ENCODE measurements at regions of chr1 and their contacts with region 1.

Region 1: GRCh38 chr1:154335025-154335714 is 9.8 kb downstream of the ATP8B2 start:
- DNase-seq: peak; percentile 78 to 95 (median 93)
- ATAC-seq: peak; percentile 94
- H3K4me3 ChIP-seq: no peak overlapping the region
- H3K4me3 Mint-ChIP-seq: peak overlapping the region; percentile 48
- H3K27ac ChIP-seq: peak overlapping the region; percentile 22 to 75
- H3K27ac Mint-ChIP-seq: peak overlapping the region; percentile 95
- H3K4me1 ChIP-seq: peaks cover 78% of the 10 kb centered on the region
- H3K4me1 Mint-ChIP-seq: peaks cover 75% of the 10 kb centered on the region
- H3K27me3 ChIP-seq: no peaks in the 10 kb centered on the region
- H3K27me3 Mint-ChIP-seq: no peaks in the 10 kb centered on the region
- CTCF ChIP-seq: peak; percentile 88

Region 2: GRCh38 chr1:153977250-153978240 is 357.6 kb before region 1 on chr1 and contains the start of gene JTB:
- CTCF ChIA-PET with region 1: no interaction called
- POLR2A ChIA-PET with region 1: no interaction called
- intact Hi-C with region 1: no loop called
- DNase-seq: peak; percentile 62 to 91 (median 86)
- ATAC-seq: peak; percentile 95
- H3K4me3 ChIP-seq: peak within 1 kb of the TSS; percentile 92 to 97
- H3K4me3 Mint-ChIP-seq: peak within 1 kb of the TSS; percentile 97
- H3K27ac ChIP-seq: peak within 1 kb of the TSS; percentile 74 to 77
- H3K27ac Mint-ChIP-seq: peak within 1 kb of the TSS; percentile 96
- H3K4me1 ChIP-seq: peaks cover 20% of the 10 kb centered on the region
- H3K4me1 Mint-ChIP-seq: peaks cover 35% of the 10 kb centered on the region
- H3K27me3 ChIP-seq: no peaks in the 10 kb centered on the region
- H3K27me3 Mint-ChIP-seq: no peaks in the 10 kb centered on the region
- CTCF ChIP-seq: no peak
- total RNA-seq, gene JTB: 90.4 to 91.1 TPM

Region 3: GRCh38 chr1:154183045-154183915 is 151.9 kb before region 1 on chr1:
- CTCF ChIA-PET with region 1: no interaction called
- POLR2A ChIA-PET with region 1: no interaction called
- intact Hi-C with region 1: loop called in 1 of 2 experiments (anchors 2 kb)
- DNase-seq: peak; percentile 86 to 96 (median 94)
- ATAC-seq: peak; percentile 75
- H3K4me3 ChIP-seq: peak overlapping the region; percentile 79 to 91
- H3K4me3 Mint-ChIP-seq: peak overlapping the region; percentile 100
- H3K27ac ChIP-seq: peak overlapping the region; percentile 95 to 97
- H3K27ac Mint-ChIP-seq: peak overlapping the region; percentile 95
- H3K4me1 ChIP-seq: peaks cover 42% of the 10 kb centered on the region
- H3K4me1 Mint-ChIP-seq: peaks cover 48% of the 10 kb centered on the region
- H3K27me3 ChIP-seq: no peaks in the 10 kb centered on the region
- H3K27me3 Mint-ChIP-seq: no peaks in the 10 kb centered on the region
- CTCF ChIP-seq: no peak

Region 4: DNA sequence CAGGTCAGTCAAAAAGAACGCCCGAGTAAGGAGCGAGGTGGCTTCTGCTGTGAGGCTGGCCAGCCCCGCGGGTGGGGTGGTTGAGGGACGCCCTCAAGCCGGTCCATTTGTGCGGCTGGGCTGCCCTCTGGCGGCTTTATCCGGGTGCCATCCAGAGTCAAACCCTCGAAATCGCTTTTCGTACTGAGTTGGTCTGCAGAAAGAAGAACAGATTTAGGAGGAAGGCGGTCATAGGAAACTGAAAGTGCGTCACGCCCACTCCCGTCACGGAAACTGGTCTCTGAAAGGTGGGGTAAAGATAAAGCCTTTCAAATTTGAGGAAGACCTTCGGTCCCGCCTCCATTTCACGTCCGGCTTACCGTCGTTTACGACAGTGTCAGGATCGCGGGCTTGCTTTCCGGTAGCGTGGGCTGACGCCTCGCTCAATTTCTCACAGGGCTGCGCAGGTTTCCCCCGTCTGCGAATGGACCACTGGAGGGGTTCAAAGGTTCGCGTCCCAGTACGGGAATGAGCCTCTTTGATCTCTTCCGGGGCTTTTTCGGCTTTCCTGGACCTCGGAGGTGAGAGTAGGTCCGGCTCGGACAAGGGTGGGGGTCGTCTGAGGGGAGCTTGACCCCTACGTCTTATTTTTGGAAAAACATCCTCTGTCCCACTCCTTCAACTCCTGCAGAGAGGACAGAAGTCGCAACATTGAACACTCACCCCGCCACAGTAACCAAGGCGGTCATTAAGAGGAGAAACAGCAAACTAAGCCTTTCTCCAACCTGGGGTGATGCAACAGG is 62.8 kb before region 1 on chr1 and contains the start of gene HAX1:
- CTCF ChIA-PET with region 1: interaction called, 27 read pairs
- POLR2A ChIA-PET with region 1: interaction called, 5 read pairs
- intact Hi-C with region 1: loop called in 1 of 2 experiments (anchors 2 kb)
- DNase-seq: peak; percentile 91 to 100 (median 94)
- ATAC-seq: peak; percentile 85
- H3K4me3 ChIP-seq: peak within 1 kb of the TSS; percentile 85 to 91
- H3K4me3 Mint-ChIP-seq: peak within 1 kb of the TSS; percentile 94
- H3K27ac ChIP-seq: peak within 1 kb of the TSS; percentile 88 to 92
- H3K27ac Mint-ChIP-seq: peak within 1 kb of the TSS; percentile 98
- H3K4me1 ChIP-seq: peaks cover 22% of the 10 kb centered on the region
- H3K4me1 Mint-ChIP-seq: peaks cover 38% of the 10 kb centered on the region
- H3K27me3 ChIP-seq: no peaks in the 10 kb centered on the region
- H3K27me3 Mint-ChIP-seq: no peaks in the 10 kb centered on the region
- CTCF ChIP-seq: peak; percentile 75
- total RNA-seq, gene HAX1: 56.8 to 58.4 TPM

Region 5: GRCh38 chr1:154352581-154353459 is 17.6 kb after region 1 on chr1:
- CTCF ChIA-PET with region 1: interaction called, 184 read pairs
- POLR2A ChIA-PET with region 1: interaction called, 4 read pairs
- intact Hi-C with region 1: no loop called
- DNase-seq: peak in 7 of 9 experiments; percentile 21 to 72 (median 55)
- ATAC-seq: peak; percentile 73
- H3K4me3 ChIP-seq: peak overlapping the region; percentile 45 to 63
- H3K4me3 Mint-ChIP-seq: peak overlapping the region; percentile 91
- H3K27ac ChIP-seq: no peak overlapping the region
- H3K27ac Mint-ChIP-seq: peak overlapping the region; percentile 81
- H3K4me1 ChIP-seq: peaks cover 27% of the 10 kb centered on the region
- H3K4me1 Mint-ChIP-seq: peaks cover 44% of the 10 kb centered on the region
- H3K27me3 ChIP-seq: no peaks in the 10 kb centered on the region
- H3K27me3 Mint-ChIP-seq: no peaks in the 10 kb centered on the region
- CTCF ChIP-seq: no peak

Region 6: DNA sequence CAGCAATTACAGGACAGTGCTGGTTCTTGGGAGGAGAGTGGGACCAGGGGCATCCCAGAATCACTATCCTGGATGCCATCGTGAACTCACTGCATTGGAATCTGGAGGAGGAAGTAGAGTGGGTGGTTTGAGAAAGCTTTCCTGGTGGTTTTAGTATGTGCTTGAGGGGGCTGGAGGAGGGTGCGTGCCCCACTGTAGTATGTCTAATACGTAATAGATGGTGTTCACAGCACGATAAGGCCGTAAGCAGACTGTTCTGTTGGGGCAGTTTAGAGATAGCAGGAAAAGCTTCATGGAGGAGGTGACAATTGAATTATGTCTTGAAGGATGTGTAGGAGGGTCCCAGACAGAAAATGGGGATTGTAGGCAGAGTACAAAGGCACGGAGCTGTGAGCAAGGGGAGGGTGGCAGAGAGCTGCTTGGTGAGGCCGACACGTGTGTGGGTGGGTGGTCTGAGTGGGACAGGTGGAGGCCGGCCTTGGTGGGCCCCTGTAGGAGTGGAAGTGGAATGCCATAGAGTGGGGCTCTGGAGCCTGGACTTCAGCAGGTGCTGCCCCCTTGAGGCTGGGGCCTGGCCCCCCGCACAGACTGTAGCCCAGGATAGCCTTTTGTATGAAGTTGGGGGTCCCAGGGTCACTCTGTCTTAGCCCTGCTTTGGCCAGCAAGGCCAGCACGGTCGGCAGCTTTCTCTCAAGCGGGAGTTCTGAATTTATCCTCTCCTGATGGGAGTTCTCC is 107.0 kb after region 1 on chr1:
- CTCF ChIA-PET with region 1: interaction called, 11 read pairs
- POLR2A ChIA-PET with region 1: no interaction called
- intact Hi-C with region 1: no loop called
- DNase-seq: peak in 3 of 9 experiments; percentile 19 to 42 (median 30)
- ATAC-seq: no peak
- H3K4me3 ChIP-seq: no peak overlapping the region
- H3K4me3 Mint-ChIP-seq: peak overlapping the region; percentile 60
- H3K27ac ChIP-seq: peak overlapping the region in 1 of 2 experiments; percentile 22
- H3K27ac Mint-ChIP-seq: peak overlapping the region; percentile 89
- H3K4me1 ChIP-seq: peaks cover 58% of the 10 kb centered on the region
- H3K4me1 Mint-ChIP-seq: peaks cover 63% of the 10 kb centered on the region
- H3K27me3 ChIP-seq: no peaks in the 10 kb centered on the region
- H3K27me3 Mint-ChIP-seq: no peaks in the 10 kb centered on the region
- CTCF ChIP-seq: peak; percentile 24

Measured in CD8-positive, alpha-beta T cell (primary cell).